Dendritic cell treated with granulocyte-macrophage colony-stimulating factor and Interleukin-4, amounts not matched to agents 40 ng/mL and 50 ng/mL, for 4 days (primary cell): ENCODE measurements at regions of chr2 and their contacts with region 1.

Region 1: GRCh38 chr2:99725820-99726219 is 236.0 kb upstream of the REV1 start:
- H3K4me3 Mint-ChIP-seq: no peak overlapping the region
- H3K27ac Mint-ChIP-seq: no peak overlapping the region
- H3K4me1 Mint-ChIP-seq: no peaks in the 10 kb centered on the region
- H3K27me3 Mint-ChIP-seq: no peaks in the 10 kb centered on the region

Region 2: GRCh38 chr2:99806758-99807157 is 80.9 kb after region 1 on chr2:
- intact Hi-C with region 1: no loop called
- H3K4me3 Mint-ChIP-seq: no peak overlapping the region
- H3K27ac Mint-ChIP-seq: no peak overlapping the region
- H3K4me1 Mint-ChIP-seq: peaks cover 28% of the 10 kb centered on the region
- H3K27me3 Mint-ChIP-seq: no peaks in the 10 kb centered on the region

Region 3: DNA sequence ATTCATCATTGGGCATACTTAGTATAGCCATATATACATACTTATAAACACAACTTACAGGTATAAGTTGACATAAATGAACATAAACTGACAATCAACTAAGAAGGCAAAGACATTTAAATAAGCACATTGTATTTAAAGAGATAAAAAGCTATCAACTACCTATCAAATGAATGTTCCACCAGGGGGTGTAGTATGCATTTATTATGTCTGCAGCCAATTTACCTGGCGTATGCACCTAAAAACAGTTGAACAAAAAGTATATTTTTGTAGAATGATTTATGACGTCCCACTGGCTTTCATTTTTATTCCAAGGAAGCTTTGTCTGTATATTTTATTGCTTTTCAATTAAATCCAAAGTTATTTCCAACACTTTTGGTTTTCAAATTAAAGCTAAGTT is 93.0 kb after region 1 on chr2:
- intact Hi-C with region 1: loop called (anchors 2 kb)
- H3K4me3 Mint-ChIP-seq: no peak overlapping the region
- H3K27ac Mint-ChIP-seq: no peak overlapping the region
- H3K4me1 Mint-ChIP-seq: peaks cover 17% of the 10 kb centered on the region
- H3K27me3 Mint-ChIP-seq: no peaks in the 10 kb centered on the region

Region 4: DNA sequence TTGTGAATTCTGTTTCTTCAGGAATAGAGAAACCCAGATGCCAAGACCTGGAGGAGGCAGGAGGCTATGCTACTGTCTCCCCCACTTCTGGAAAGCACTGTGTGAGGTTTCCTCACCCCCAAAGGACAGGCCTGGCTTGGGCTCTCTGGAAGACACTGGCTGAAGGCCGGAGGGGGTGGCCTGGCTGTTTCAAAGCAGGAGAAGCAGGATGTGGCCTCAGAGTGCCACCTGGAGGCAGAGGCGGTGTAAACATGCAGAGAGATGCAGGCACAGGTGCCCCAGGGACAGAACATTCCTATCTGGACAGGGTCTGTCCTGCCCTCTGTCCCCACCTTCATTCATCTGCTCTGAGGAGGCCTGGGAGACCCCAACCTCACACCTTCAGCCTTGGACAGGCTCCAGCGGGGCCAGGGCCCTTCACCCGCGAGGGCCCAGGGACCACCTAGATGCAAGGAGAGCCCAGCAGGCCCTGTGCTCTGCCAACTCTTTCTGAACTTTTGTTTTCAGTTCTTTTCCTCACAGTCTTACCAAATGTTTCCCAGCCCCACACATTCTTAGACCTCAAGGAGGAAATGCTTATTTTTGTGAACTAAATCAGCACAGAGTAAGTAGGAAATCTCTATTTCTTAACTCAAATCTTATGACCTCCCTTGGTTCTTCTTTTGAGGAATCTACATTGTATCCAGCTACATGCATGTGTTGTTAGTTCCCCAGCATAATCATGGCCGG is 517.2 kb after region 1 on chr2:
- intact Hi-C with region 1: loop called (anchors 5 kb)
- H3K4me3 Mint-ChIP-seq: no peak overlapping the region
- H3K27ac Mint-ChIP-seq: peak overlapping the region; percentile 64
- H3K4me1 Mint-ChIP-seq: peaks cover 31% of the 10 kb centered on the region
- H3K27me3 Mint-ChIP-seq: peaks cover 4% of the 10 kb centered on the region

Region 5: DNA sequence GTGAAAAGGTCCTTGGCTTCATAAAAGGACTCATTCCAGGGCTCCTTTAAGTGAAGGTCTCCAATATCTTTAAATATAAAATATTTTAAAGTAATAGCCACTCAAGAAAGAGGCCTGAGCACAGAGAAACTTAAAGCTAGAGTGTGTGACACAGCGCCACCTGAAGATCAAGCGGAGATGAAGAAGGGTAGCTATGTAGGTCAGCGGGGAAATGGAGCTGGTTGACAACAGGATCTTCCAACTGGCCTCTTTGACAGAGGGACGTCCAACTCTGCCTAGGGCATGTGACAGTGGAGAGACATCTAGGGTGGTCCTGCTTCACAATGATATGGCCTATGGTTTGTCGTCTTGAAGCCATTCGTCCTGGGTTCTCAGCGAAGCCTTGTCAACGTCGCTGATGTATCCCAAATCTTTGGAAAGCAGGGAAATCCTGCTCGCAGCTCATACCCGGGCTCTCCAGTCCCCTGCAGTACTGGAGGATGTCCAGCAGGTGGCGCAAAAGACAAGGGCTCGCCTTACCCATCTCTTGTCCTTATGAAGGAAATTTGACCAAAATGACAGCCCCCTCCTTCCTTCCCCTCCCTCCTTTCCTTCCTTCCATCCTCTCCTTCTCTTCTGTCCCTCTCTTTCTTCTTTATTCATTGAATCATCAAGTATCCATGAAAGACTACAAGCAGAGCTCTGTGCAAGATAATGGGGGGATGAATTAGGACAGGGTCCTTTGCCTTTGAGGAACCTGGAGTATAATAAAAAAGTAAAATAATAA is 536.9 kb after region 1 on chr2:
- intact Hi-C with region 1: loop called (anchors 5 kb)
- H3K4me3 Mint-ChIP-seq: no peak overlapping the region
- H3K27ac Mint-ChIP-seq: no peak overlapping the region
- H3K4me1 Mint-ChIP-seq: peaks cover 15% of the 10 kb centered on the region
- H3K27me3 Mint-ChIP-seq: no peaks in the 10 kb centered on the region